Endothelial cell of umbilical vein (primary cell): ENCODE measurements at regions of chr4 and their contacts with region 1.

Region 1: GRCh38 chr4:683982-684622 is 4.8 kb downstream of the SLC49A3 start:
- DNase-seq: peak; percentile 53
- H3K4me3 ChIP-seq: no peak overlapping the region
- H3K27ac ChIP-seq: no peak overlapping the region
- H3K4me1 ChIP-seq: peaks cover 13% of the 10 kb centered on the region
- H3K27me3 ChIP-seq: no peaks in the 10 kb centered on the region
- CTCF ChIP-seq: peak; percentile 69 to 89
- POLR2A ChIP-seq: no peak

Region 2: DNA sequence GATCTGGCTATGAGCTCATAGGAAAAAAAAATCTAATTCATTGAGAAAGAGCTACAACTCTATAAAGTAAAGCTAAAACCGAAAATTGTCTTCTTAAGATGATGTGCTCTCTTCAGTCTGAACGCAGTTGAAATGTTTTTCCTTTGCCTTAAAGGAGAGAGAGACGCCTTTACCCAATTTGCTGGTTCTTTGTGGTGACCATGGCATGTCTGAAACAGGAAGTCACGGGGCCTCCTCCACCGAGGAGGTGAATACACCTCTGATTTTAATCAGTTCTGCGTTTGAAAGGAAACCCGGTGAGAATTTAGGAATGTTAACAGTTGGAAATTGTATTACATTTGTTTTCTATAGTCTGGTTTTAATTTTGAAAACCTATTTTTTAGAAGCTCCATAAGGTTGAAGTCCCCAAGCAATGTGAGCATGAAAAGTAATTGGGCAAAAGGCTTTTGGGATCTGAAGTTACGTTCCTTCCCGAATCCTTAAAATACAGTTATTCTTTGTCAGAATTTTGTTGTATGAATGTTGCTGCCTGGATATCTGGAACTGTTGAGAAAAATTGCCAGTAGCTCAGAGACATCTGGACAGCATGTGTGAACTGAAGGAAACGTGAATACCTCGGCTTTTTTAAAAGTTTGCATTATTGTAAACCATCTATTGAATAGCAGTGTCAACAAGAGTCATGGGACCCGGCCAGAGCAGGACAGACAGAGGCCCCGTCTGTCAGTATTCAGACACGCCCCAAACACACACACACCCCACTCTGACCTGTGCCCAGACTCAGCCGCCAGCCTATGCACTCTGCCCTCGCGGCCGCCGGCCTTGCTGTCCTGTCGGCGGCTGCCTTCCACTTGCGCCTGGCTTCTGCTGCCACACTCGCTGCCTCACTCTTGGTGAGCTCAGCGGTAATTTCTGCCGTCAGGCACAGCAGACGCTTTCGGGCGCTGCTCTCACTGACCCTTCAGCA is 175.1 kb before region 1 on chr4:
- CTCF ChIA-PET with region 1: no interaction called
- POLR2A ChIA-PET with region 1: no interaction called
- dilution Hi-C with region 1: no loop called
- intact Hi-C with region 1: no loop called
- DNase-seq: no peak
- H3K4me3 ChIP-seq: no peak overlapping the region
- H3K27ac ChIP-seq: no peak overlapping the region
- H3K4me1 ChIP-seq: no peaks in the 10 kb centered on the region
- H3K27me3 ChIP-seq: no peaks in the 10 kb centered on the region
- CTCF ChIP-seq: no peak
- POLR2A ChIP-seq: no peak

Region 3: GRCh38 chr4:705278-706082 is 21.4 kb after region 1 on chr4 and contains the start of gene PCGF3:
- CTCF ChIA-PET with region 1: interaction called, 10 read pairs
- POLR2A ChIA-PET with region 1: no interaction called
- dilution Hi-C with region 1: no loop called
- intact Hi-C with region 1: loop called (anchors 1 kb)
- DNase-seq: peak; percentile 96
- H3K4me3 ChIP-seq: peak within 1 kb of the TSS; percentile 46 to 77 (median 71)
- H3K27ac ChIP-seq: peak within 1 kb of the TSS; percentile 75
- H3K4me1 ChIP-seq: peaks cover 14% of the 10 kb centered on the region
- H3K27me3 ChIP-seq: no peaks in the 10 kb centered on the region
- CTCF ChIP-seq: no peak
- POLR2A ChIP-seq: peak; percentile 54
- total RNA-seq, gene PCGF3: 69.2 and 70.2 TPM in 2 replicates

Region 4: GRCh38 chr4:1826531-1827350 is 1142.6 kb after region 1 on chr4:
- CTCF ChIA-PET with region 1: no interaction called
- POLR2A ChIA-PET with region 1: no interaction called
- dilution Hi-C with region 1: no loop called
- intact Hi-C with region 1: no loop called
- DNase-seq: no peak
- H3K4me3 ChIP-seq: no peak overlapping the region
- H3K27ac ChIP-seq: no peak overlapping the region
- H3K4me1 ChIP-seq: no peaks in the 10 kb centered on the region
- H3K27me3 ChIP-seq: no peaks in the 10 kb centered on the region
- CTCF ChIP-seq: no peak
- POLR2A ChIP-seq: no peak